Posterior vena cava (tissue), 2 donors: ENCODE measurements at regions of chr6 and their contacts with region 1.

Region 1: GRCh38 chr6:18973251-18973650 is 586.1 kb downstream of the RNF144B start:
- DNase-seq: no peak

Region 2: DNA sequence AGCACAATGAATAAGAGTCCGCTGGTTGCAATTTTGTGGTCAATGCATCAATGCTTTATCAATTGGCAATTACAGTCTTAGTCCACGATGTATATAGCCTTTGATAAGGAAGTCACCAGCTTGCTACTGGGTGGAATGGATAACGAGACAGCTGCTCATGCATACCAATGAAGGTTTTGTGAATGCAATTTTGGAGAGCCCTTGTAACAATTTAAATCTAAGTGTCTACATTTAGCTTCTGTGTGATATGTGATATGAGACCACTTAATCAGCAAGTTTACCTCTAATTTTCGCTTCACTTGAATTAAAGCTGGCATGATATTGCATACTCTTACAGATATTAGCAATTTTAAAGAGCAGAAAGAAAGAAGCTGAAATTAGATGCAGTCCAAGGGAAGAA is 42.2 kb before region 1 on chr6:
- intact Hi-C with region 1: no loop called
- DNase-seq: no peak

Region 3: GRCh38 chr6:19857139-19857538 is 883.9 kb after region 1 on chr6:
- intact Hi-C with region 1: loop called in 1 of 2 experiments (anchors 5 kb)
- DNase-seq: no peak